ENCODE measurements at regions of chr2 and their contacts with region 1.

Region 1: GRCh38 chr2:43611987-43612894 is 16.4 kb upstream of the THADA start:
- DNase-seq: no peak
- H3K4me3 ChIP-seq: no peak overlapping the region
- CTCF ChIP-seq: peak; percentile 79

Region 2: GRCh38 chr2:43595603-43596412 is 16.4 kb before region 1 on chr2 and contains the start of gene THADA:
- CTCF ChIA-PET with region 1: interaction called, 58 read pairs
- POLR2A ChIA-PET with region 1: no interaction called
- DNase-seq: peak; percentile 92
- H3K4me3 ChIP-seq: peak within 1 kb of the TSS; percentile 94
- CTCF ChIP-seq: no peak

Region 3: GRCh38 chr2:43622931-43623451 is 10.8 kb after region 1 on chr2:
- CTCF ChIA-PET with region 1: interaction called, 22 read pairs
- POLR2A ChIA-PET with region 1: no interaction called
- DNase-seq: no peak
- H3K4me3 ChIP-seq: no peak overlapping the region
- CTCF ChIP-seq: no peak

Measured in AG04449 (cell line).